Activated naive CD4-positive, alpha-beta T cell treated with anti-CD3 and anti-CD28 coated beads for 36 hours (primary cell): ENCODE measurements at regions of chr5 and their contacts with region 1.

Region 1: DNA sequence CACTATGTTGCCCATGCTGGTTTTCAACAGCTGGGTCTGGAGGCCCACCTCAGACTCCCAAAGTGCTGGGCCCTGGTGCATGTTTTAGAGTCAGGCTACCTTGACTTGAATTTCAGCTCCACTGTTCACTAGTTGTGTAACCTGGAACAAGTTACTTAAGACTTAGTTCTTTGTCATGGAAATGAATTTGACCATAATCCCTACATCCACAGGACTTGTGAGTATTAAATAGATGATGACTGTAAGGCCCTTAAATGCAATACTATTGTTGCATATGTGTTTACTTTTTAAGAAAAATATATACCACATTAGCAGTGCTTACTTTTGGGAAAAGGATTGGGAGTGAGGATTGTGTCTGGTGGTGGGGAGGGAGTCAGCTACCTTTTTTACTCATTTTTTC is 16.4 kb downstream of the PAIP2 start:
- DNase-seq: no peak
- H3K4me3 Mint-ChIP-seq: no peak overlapping the region
- H3K27ac Mint-ChIP-seq: no peak overlapping the region
- H3K4me1 Mint-ChIP-seq: peaks cover 23% of the 10 kb centered on the region
- H3K27me3 Mint-ChIP-seq: no peaks in the 10 kb centered on the region

Region 2: GRCh38 chr5:139287890-139288635 is 70.0 kb before region 1 on chr5:
- CTCF ChIA-PET with region 1: no interaction called
- intact Hi-C with region 1: no loop called
- DNase-seq: no peak
- H3K4me3 Mint-ChIP-seq: no peak overlapping the region
- H3K27ac Mint-ChIP-seq: no peak overlapping the region
- H3K4me1 Mint-ChIP-seq: no peaks in the 10 kb centered on the region
- H3K27me3 Mint-ChIP-seq: no peaks in the 10 kb centered on the region

Region 3: DNA sequence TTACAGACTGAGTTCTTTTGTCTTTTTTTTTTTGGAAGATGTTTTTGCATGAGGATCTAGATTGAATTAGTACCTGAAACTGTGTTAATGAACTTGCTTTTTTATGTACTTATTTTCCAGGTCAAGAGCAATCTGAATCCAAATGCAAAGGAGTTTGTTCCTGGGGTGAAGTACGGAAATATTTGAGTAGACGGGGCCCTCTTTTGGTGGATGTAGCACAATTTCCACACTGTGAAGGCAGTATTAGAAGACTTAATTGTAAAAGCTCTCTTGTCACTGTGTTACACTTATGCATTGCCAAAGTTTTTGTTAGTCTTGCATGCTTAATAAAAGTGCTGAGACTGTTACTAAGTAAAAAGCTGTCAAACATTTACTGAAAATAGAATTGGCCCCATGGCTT is 10.5 kb after region 1 on chr5:
- CTCF ChIA-PET with region 1: interaction called, 11 read pairs
- intact Hi-C with region 1: no loop called
- DNase-seq: no peak
- H3K4me3 Mint-ChIP-seq: no peak overlapping the region
- H3K27ac Mint-ChIP-seq: no peak overlapping the region
- H3K4me1 Mint-ChIP-seq: peaks cover 5% of the 10 kb centered on the region
- H3K27me3 Mint-ChIP-seq: no peaks in the 10 kb centered on the region